Activated naive CD4-positive, alpha-beta T cell treated with anti-CD3 and anti-CD28 coated beads for 36 hours (primary cell): ENCODE measurements at regions of chr6 and their contacts with region 1.

Region 1: DNA sequence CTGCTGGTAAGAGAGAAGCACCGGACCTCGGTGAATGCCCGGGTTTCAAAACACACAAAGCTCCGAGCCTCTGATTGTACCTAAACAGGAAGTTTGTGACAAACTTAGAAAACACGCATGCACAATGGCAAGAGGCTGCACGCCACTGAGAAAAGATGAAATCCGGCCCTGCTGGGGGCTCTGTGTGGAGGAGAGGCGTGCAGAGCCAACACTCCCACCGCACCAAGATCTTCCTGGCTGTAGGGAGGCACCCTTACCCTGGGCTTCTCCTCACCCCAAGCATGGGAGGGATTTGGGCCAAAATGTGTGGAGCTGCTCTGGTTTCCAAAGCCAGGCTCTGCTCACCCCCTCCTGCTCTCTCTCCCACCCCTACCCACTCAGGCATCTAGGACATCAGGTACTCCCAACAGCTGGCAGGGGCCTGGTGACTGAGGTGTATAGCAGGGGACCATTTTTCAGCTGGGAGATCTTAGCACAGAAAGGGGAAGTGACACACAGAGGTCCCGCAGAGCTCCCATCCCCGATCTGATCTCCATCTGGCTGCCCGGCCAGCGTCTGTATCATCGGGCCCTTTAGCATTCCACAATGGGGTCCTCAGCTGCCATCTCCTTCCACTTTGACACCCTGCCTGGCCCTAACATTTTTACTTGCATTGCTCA is 84.2 kb downstream of the TRERF1 start:
- DNase-seq: peak; percentile 49
- H3K4me3 Mint-ChIP-seq: peak overlapping the region; percentile 52
- H3K27ac Mint-ChIP-seq: peak overlapping the region; percentile 84
- H3K4me1 Mint-ChIP-seq: peaks cover 53% of the 10 kb centered on the region
- H3K27me3 Mint-ChIP-seq: no peaks in the 10 kb centered on the region

Region 2: DNA sequence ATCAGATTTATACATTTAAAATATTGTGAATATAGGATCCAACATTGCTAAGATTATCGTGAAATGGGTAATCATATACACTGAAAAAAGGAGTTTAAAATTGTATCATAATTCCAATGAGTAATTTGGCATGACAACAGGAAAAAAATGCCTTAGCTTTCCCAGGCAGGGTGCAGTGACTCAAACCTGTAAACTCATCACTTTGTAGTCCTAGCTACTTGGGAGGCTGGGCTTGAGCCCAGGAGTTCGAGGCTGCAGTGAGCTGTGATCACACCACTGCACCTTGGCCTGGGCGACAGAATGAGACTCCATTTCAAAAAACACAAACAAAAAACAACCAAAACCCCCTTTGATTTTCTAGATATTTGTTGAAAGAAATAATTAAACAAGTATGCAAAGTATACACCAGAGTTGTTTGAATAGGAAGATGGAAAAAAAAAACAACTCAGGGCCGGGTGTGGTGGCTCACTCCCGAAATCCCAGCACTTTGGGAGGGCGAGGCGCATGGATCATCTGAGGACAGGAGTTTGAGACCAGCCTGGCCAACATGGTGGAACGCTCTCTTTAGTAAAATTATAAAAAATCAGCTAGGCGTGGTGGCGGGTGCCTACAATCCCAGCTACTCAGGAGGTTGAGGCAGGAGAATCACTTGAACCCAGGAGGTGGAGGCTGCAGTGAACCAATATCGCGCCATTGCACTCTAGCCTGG is 14.5 kb before region 1 on chr6:
- CTCF ChIA-PET with region 1: no interaction called
- intact Hi-C with region 1: loop called (anchors 1 kb)
- DNase-seq: no peak
- H3K4me3 Mint-ChIP-seq: no peak overlapping the region
- H3K27ac Mint-ChIP-seq: no peak overlapping the region
- H3K4me1 Mint-ChIP-seq: peaks cover 11% of the 10 kb centered on the region
- H3K27me3 Mint-ChIP-seq: no peaks in the 10 kb centered on the region